ENCODE measurements at regions of chr13 and their contacts with region 1.

Region 1: DNA sequence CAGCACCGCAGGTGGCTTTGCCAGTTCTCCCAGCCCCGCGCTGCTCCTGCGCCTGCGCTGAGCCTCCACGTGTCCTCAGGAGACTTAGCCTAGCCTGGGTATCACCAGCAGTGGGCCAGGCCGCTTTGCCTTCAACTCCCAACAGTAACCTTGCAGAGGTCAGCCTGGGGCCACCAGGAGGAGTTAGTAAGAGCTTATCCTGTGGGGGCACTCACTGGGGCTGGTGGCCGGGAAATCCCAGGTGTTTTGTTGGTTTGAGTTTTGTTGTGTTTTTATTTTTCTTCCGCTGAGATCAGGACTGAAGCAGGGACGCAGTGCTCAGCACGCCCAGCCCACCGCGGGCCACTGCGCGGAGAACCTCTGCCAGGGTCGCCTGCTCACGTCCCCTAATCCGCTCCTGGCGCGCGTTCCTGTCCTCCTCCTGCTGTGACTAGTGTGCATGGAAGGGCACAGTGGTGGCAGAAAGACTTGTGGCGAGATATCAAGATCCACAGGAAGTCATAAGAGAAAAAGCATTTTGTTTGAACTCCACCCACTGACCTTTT is 207.4 kb upstream of the RFC3 start:
- DNase-seq: peak; percentile 87
- H3K4me3 Mint-ChIP-seq: peak overlapping the region; percentile 79
- H3K27ac Mint-ChIP-seq: peak overlapping the region; percentile 94
- H3K4me1 Mint-ChIP-seq: peaks cover 50% of the 10 kb centered on the region
- H3K27me3 Mint-ChIP-seq: no peaks in the 10 kb centered on the region

Region 2: DNA sequence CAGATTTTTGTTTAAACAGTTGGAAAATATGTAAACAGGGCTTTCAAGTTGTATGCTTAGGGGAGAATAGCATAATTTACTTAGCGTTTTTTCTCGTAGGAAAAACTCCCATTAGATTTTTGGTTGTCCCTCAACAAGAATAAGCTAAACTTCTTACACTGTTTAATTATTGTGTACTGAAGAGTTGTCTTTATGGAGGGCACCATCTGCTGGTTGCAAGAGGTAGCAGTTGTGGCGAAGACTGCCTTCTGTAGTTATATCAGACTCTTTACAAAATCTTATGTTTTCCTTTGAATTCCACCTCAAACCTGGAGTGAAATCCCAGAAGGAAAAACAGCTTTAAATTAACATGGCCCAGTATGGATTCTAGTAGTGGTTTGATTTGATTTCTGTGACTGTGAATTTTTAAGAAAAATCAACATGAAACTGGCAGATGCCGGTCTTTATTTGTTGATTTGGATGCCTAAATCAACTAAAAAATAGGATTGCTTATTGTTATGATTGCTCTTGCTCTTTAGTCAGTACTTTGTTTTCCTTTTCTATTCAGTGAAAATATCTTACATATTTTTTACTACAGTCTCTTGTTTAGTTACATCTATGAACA is 970.9 kb before region 1 on chr13:
- CTCF ChIA-PET with region 1: no interaction called
- POLR2A ChIA-PET with region 1: no interaction called
- intact Hi-C with region 1: loop called (anchors 10 kb)
- DNase-seq: peak; percentile 56
- H3K4me3 Mint-ChIP-seq: no peak overlapping the region
- H3K27ac Mint-ChIP-seq: no peak overlapping the region
- H3K4me1 Mint-ChIP-seq: peaks cover 41% of the 10 kb centered on the region
- H3K27me3 Mint-ChIP-seq: no peaks in the 10 kb centered on the region

Region 3: DNA sequence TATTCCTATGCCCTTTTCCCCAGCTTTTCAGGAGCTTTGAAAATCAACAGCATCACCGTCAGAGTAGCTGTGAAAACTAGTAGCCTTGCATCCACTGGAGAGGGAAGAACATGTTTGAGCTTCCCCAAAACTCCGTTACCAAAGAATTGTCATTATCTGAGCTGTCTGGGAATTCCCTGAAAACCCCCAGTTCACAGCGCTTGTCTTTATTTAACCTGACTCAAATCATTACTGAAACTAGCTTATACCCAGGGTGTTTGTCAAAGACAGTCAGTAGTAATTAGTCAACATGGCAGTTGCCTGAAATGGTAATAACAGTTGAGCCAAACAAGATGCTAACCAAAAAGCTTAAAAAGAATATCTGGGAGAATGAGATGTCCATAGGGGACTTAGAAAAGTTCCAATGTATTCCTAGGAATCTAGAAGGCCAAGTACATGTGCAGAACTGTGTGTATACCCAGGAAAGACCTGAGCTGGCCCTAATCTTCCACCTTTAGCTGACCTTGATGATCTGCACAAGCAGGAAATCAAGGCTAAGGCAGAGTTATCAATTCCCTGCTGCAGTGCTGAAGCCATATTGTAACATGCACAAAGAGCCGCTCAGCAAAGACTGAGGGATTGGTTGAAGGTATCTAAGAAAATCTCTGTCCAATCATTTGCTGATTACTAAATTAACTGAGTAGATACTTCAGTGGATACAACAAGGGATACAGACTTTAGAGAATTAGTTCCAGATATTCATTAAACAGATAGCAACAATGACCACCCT is 463.5 kb before region 1 on chr13:
- CTCF ChIA-PET with region 1: no interaction called
- POLR2A ChIA-PET with region 1: no interaction called
- intact Hi-C with region 1: loop called (anchors 1 kb)
- DNase-seq: peak; percentile 31
- H3K4me3 Mint-ChIP-seq: no peak overlapping the region
- H3K27ac Mint-ChIP-seq: peak overlapping the region; percentile 30
- H3K4me1 Mint-ChIP-seq: peaks cover 16% of the 10 kb centered on the region
- H3K27me3 Mint-ChIP-seq: peaks cover 11% of the 10 kb centered on the region

Region 4: DNA sequence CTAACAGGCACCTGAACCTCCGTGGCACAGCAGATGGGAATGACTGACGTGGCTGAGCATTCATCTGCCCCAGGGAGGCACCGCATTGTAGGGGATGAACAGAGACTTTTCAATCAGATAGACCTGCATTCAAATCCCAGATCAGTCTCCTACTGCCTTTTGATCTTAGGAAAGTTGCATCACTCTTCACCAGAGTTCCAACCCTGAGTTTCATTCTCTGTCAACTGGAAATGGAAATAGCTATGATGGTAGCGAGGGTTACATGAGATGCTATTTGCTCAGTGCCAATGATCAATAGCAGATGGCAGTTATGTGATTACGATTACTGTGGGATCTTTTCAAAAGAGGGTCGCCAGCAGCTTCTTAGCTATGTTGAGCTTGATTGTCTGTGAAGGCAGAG is 18.1 kb after region 1 on chr13:
- CTCF ChIA-PET with region 1: interaction called, 3 read pairs
- POLR2A ChIA-PET with region 1: interaction called, 3 read pairs
- intact Hi-C with region 1: loop called (anchors 1 kb)
- DNase-seq: no peak
- H3K4me3 Mint-ChIP-seq: no peak overlapping the region
- H3K27ac Mint-ChIP-seq: no peak overlapping the region
- H3K4me1 Mint-ChIP-seq: peaks cover 26% of the 10 kb centered on the region
- H3K27me3 Mint-ChIP-seq: no peaks in the 10 kb centered on the region

Region 5: GRCh38 chr13:33654006-33654405 is 43.5 kb after region 1 on chr13:
- CTCF ChIA-PET with region 1: no interaction called
- POLR2A ChIA-PET with region 1: no interaction called
- intact Hi-C with region 1: no loop called
- DNase-seq: no peak
- H3K4me3 Mint-ChIP-seq: no peak overlapping the region
- H3K27ac Mint-ChIP-seq: no peak overlapping the region
- H3K4me1 Mint-ChIP-seq: no peaks in the 10 kb centered on the region
- H3K27me3 Mint-ChIP-seq: peaks cover 2% of the 10 kb centered on the region

Region 6: DNA sequence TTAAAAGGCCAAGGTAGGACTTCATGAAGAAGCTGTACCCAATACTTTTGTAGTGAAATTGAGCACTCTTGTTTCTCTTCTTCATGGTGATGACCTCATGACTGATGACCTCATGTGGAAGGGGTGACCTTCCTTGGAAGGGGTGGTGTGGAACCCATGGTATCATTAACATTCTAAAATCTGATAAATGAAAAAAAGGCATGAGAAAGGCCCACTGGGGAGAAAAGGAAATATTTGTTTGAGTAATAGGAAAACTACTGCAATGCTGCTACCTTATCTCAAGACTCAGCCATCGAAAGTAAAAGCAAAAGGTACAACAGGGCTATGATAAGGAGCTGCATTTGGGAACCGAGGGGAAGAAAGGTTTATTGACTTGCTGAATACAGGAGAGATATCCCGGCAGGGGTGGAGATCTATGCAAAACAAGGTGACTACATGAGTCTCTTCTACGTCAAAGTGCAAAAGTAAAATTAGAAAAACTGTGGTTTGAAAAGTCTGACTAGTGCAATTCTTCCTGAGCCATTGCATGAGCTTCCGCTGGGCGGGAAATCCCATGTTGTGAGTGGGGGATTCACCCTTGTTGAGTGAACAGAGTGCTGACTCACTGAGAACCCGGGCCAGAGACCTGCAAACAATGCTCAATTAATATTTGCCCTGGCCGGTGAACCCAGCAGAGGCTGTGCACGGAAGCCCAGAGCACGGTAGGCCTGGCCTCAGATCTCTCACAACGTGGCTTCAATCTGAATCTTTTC is 68.5 kb after region 1 on chr13:
- CTCF ChIA-PET with region 1: interaction called, 10 read pairs
- POLR2A ChIA-PET with region 1: interaction called, 16 read pairs
- intact Hi-C with region 1: loop called (anchors 1 kb)
- DNase-seq: peak; percentile 93
- H3K4me3 Mint-ChIP-seq: peak overlapping the region; percentile 81
- H3K27ac Mint-ChIP-seq: peak overlapping the region; percentile 98
- H3K4me1 Mint-ChIP-seq: peaks cover 46% of the 10 kb centered on the region
- H3K27me3 Mint-ChIP-seq: no peaks in the 10 kb centered on the region

Region 7: DNA sequence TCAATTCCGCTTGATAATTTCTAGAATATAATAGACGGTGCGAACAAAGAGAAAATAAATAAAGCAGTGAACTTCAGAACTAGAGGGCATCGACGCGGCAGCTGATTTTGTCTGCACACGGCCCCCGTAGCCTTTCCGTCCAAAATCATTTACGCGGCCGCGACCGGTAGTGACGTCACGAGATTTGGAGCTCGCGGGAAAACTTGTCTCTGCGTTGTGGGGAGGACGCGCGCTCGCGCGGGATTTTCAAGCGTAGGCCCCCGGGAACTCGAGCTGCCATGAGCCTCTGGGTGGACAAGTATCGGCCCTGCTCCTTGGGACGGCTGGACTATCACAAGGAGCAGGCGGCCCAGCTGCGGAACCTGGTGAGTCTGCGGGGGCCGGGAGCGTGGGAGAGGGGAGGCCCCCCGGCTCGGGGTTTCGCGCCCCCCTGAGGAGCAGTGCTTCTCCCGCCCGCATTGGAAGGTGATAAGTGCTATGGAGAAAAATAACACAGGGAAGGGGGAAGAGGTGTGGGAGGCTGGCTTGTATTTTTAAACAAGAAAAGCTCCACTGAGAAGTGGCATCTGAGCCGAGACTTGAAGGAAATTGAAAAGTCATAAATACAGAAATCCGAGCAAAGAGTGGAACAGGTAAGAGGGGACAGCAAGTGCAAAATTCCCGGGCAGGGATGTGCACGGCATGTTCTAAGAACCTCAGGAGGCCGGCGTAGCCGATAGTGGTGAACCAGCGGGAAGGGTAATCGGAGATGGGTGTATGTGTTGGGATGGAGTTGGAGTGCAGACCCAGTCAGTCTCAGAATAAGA is 207.6 kb after region 1 on chr13 and contains the start of gene RFC3:
- CTCF ChIA-PET with region 1: no interaction called
- POLR2A ChIA-PET with region 1: no interaction called
- intact Hi-C with region 1: loop called (anchors 1 kb)
- DNase-seq: peak; percentile 96
- H3K4me3 Mint-ChIP-seq: peak within 1 kb of the TSS; percentile 99
- H3K27ac Mint-ChIP-seq: peak within 1 kb of the TSS; percentile 62
- H3K4me1 Mint-ChIP-seq: peaks cover 34% of the 10 kb centered on the region
- H3K27me3 Mint-ChIP-seq: peaks cover 4% of the 10 kb centered on the region
- total RNA-seq, gene RFC3: 52.4 to 53.9 TPM

Measured in activated CD4-positive, alpha-beta memory T cell treated with anti-CD3 and anti-CD28 coated beads for 36 hours (primary cell).